MCF 10A (cell line): ENCODE measurements at regions of chr12 and their contacts with region 1.

Region 1: GRCh38 chr12:54935235-54935951 is 49.2 kb downstream of the TESPA1 start:
- DNase-seq: peak; percentile 93
- H3K4me3 Mint-ChIP-seq: peak overlapping the region; percentile 7
- H3K27ac Mint-ChIP-seq: peak overlapping the region; percentile 96
- H3K4me1 Mint-ChIP-seq: peaks cover 26% of the 10 kb centered on the region
- H3K27me3 Mint-ChIP-seq: no peaks in the 10 kb centered on the region
- CTCF ChIP-seq: peak; percentile 12

Region 2: GRCh38 chr12:54879150-54879549 is 56.2 kb before region 1 on chr12:
- CTCF ChIA-PET with region 1: no interaction called
- POLR2A ChIA-PET with region 1: no interaction called
- intact Hi-C with region 1: loop called (anchors 2 kb)
- DNase-seq: no peak
- H3K4me3 Mint-ChIP-seq: no peak overlapping the region
- H3K27ac Mint-ChIP-seq: peak overlapping the region; percentile 92
- H3K4me1 Mint-ChIP-seq: peaks cover 20% of the 10 kb centered on the region
- H3K27me3 Mint-ChIP-seq: no peaks in the 10 kb centered on the region
- CTCF ChIP-seq: no peak

Region 3: GRCh38 chr12:55051197-55051933 is 116.0 kb after region 1 on chr12:
- CTCF ChIA-PET with region 1: no interaction called
- POLR2A ChIA-PET with region 1: no interaction called
- intact Hi-C with region 1: no loop called
- DNase-seq: peak; percentile 17
- H3K4me3 Mint-ChIP-seq: no peak overlapping the region
- H3K27ac Mint-ChIP-seq: no peak overlapping the region
- H3K4me1 Mint-ChIP-seq: no peaks in the 10 kb centered on the region
- H3K27me3 Mint-ChIP-seq: peaks cover 87% of the 10 kb centered on the region
- CTCF ChIP-seq: no peak

Region 4: GRCh38 chr12:55885113-55885512 is 949.7 kb after region 1 on chr12:
- CTCF ChIA-PET with region 1: no interaction called
- POLR2A ChIA-PET with region 1: no interaction called
- intact Hi-C with region 1: no loop called
- DNase-seq: no peak
- H3K4me3 Mint-ChIP-seq: no peak overlapping the region
- H3K27ac Mint-ChIP-seq: no peak overlapping the region
- H3K4me1 Mint-ChIP-seq: no peaks in the 10 kb centered on the region
- H3K27me3 Mint-ChIP-seq: no peaks in the 10 kb centered on the region
- CTCF ChIP-seq: no peak